Activated CD8-positive, alpha-beta T cell treated with anti-CD3 and anti-CD28 coated beads, Interleukin-2, amount 10 ng/mL, durations not matched to agents 7 days and 5 days (primary cell): ENCODE measurements at regions of chr14 and their contacts with region 1.

Region 1: DNA sequence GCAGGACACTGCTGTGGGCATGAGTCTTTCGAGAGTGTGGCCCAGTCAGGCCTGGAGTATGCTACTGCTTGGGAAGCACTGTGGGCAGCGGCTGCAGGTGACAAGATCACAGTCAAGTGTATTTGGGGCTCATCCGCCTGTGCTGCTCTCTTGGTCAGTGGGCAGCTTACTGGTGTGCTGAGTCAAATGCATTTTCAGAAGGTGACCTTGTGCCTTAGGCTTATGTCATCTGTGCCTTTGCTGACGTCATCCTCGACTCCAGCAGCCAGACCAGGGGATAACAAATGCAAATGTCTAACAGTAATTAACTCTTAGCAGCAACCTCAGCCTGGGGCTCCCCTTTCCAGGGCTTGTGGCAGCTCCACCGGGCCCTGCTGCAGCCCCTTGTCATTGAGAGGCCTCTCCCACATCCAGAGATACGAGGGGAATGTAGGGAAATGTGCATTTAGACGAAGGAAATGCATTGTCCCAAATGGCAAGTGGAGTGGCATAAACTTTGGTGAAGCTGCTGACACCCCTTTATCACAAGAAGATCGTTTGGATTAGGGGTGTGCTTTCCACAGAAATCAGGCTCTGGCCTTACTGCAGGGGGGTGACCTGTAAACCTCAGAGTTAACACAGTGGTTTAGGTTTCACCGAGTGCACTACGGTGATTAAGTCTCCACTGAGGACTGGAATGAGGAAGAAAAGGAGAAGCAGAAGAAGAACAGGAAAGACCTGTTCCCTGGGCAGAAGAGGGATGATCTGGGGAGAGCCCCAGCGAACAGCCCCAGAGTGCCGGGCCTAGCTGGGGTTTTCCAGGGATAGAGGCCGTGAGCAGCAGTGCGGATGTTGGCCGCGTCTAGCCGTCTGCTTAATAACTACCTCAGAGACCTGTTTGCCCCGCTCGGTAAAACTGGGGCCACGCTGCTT is 39.7 kb downstream of the PSMA6 start:
- DNase-seq: no peak
- ATAC-seq: no peak
- H3K4me3 Mint-ChIP-seq: no peak overlapping the region
- H3K27ac Mint-ChIP-seq: peak overlapping the region; percentile 89
- H3K4me1 Mint-ChIP-seq: peaks cover 35% of the 10 kb centered on the region
- H3K27me3 Mint-ChIP-seq: no peaks in the 10 kb centered on the region

Region 2: GRCh38 chr14:35292051-35292769 is 39.7 kb before region 1 on chr14 and contains the start of gene PSMA6:
- CTCF ChIA-PET with region 1: interaction called, 3 read pairs
- POLR2A ChIA-PET with region 1: interaction called, 13 read pairs
- DNase-seq: peak; percentile 100
- ATAC-seq: peak; percentile 94
- H3K4me3 Mint-ChIP-seq: peak within 1 kb of the TSS; percentile 99
- H3K27ac Mint-ChIP-seq: peak within 1 kb of the TSS; percentile 98
- H3K4me1 Mint-ChIP-seq: peaks cover 41% of the 10 kb centered on the region
- H3K27me3 Mint-ChIP-seq: no peaks in the 10 kb centered on the region
- total RNA-seq, gene PSMA6: 266 to 269 TPM